Mucosa of descending colon (tissue), 3 donors: ENCODE measurements at regions of chr22 and their contacts with region 1.

Region 1: DNA sequence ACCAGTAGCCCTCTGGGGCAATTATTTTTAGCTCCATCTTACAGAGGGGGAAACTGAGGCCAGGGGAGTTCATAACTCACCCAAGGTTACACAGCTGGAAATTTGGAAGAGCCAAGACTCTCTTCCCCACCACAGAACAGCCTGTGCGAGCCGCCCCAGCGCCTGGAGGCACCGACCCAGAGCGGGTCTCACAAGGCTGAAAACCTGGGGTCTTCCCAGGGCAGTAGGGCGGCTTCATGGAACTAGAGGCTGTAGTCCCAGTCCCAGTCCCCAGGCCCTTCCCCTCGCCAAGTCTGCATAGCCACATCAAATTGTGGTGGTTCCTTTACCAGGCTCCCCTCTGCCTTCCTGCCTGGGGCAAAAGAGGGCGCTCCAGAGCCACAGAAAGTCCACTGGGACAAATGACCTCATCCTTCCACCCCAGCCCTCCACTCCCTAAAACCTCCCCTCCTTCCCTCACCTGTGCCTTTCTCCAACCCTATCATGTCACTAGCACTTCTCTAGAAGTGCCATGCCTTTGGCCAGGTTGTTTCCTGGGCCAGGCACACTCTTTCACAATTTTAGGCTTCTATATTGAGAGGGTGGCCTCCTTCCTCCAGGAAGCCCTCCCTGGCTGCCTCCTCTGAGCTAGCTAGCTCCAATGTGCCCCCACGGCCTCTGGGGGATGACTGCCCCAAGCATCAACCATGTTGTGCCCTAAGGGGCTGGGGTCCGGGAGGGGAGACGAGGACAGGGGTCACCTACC is 15.2 kb upstream of the CDC42EP1 start:
- DNase-seq: peak in 2 of 3 donors; percentile 90 to 92
- ATAC-seq: peak; percentile 75
- H3K4me3 ChIP-seq: no peak overlapping the region
- H3K4me1 ChIP-seq: peaks cover 16% of the 10 kb centered on the region
- CTCF ChIP-seq: peak; percentile 50

Region 2: GRCh38 chr22:37486224-37486845 is 58.8 kb before region 1 on chr22 and contains the start of gene MFNG:
- intact Hi-C with region 1: no loop called
- DNase-seq: peak; percentile 73 to 92 (median 85)
- ATAC-seq: peak; percentile 85
- H3K4me3 ChIP-seq: peak within 1 kb of the TSS; percentile 5
- H3K4me1 ChIP-seq: peaks cover 11% of the 10 kb centered on the region
- CTCF ChIP-seq: no peak
- total RNA-seq, gene MFNG: 11.3 to 16.1 (median 13.7) TPM

Region 3: GRCh38 chr22:37561212-37562048 is 16.3 kb after region 1 on chr22:
- intact Hi-C with region 1: loop called in 1 of 2 experiments (anchors 2 kb)
- DNase-seq: peak; percentile 92 to 99 (median 97)
- ATAC-seq: peak; percentile 75
- H3K4me3 ChIP-seq: peak overlapping the region; percentile 67
- H3K4me1 ChIP-seq: peaks cover 53% of the 10 kb centered on the region
- CTCF ChIP-seq: peak; percentile 81